ENCODE measurements at regions of chr2 and their contacts with region 1.

Region 1: DNA sequence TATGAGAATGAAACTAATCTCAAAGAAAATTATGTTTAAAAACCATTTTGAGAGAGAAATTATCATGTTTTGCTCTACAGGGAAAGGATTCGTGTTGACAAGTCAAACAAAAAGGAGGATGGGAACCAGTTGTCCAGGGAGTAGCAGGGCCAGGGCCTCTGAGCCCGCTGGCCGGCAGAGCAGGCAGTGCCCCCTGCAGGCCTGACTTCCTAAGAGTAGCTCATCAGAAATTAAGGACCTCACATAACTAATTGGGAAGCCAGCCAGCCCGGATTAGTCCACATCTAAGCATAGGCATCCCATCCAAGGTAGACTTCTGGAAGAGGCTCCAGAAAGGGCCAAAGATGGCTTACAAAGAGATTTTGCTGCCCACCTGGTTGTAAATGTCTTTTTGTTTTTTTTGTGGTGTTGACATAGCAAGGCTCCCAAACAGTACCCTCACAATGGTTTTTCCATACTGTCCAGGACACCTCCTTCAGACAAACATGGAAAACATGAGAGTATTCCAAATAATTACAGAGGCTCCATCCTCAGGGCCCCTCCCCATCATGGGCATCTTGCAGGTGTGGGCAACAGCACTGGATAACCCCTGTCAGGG is 241.2 kb upstream of the TANK start:
- DNase-seq: peak; percentile 21
- ATAC-seq: peak; percentile 87
- H3K4me3 ChIP-seq: no peak overlapping the region
- H3K27ac ChIP-seq: no peak overlapping the region
- H3K4me1 ChIP-seq: no peaks in the 10 kb centered on the region
- H3K27me3 ChIP-seq: no peaks in the 10 kb centered on the region
- CTCF ChIP-seq: peak; percentile 60 to 68 (median 65)
- POLR2A ChIP-seq: no peak
- RAD21 ChIP-seq: peak; percentile 81

Region 2: DNA sequence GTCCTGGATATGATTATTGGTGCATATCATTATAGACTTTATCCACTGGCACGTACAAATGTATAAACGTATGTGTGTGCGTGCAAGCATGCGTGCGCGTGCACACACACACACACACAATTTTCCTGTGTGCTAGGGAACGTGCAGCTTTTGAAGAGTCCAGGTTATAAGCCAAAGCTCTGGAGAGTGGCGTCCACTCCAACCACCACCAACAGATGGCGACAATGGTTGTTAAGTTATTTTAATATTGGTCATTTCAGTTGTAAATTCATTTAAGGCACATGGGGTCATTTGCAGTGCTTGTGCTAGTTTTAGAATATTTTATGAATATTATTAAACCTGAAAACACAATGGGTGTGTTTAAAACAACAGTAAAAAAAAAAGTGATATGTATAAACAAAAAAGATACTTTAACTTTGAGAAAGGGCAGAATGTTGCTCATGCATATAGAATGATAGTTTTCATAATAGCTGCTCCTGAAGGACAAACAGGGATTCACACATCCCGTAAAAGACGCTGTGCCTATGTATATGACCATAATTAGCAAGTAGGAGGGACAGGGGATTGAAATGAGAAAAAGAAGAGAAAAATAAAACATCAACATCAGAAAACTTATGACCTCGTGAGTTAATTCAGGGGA is 594.7 kb before region 1 on chr2:
- CTCF ChIA-PET with region 1: interaction called, 3 read pairs
- POLR2A ChIA-PET with region 1: no interaction called
- RAD21 ChIA-PET with region 1: no interaction called
- intact Hi-C with region 1: loop called (anchors 1 kb)
- DNase-seq: peak; percentile 26
- ATAC-seq: peak; percentile 87
- H3K4me3 ChIP-seq: no peak overlapping the region
- H3K27ac ChIP-seq: no peak overlapping the region
- H3K4me1 ChIP-seq: no peaks in the 10 kb centered on the region
- H3K27me3 ChIP-seq: no peaks in the 10 kb centered on the region
- CTCF ChIP-seq: peak; percentile 61 to 75 (median 74); a peak in 5 of 6 replicates
- POLR2A ChIP-seq: no peak
- RAD21 ChIP-seq: peak; percentile 76

Region 3: GRCh38 chr2:160353166-160353565 is 565.8 kb before region 1 on chr2:
- CTCF ChIA-PET with region 1: interaction called, 3 read pairs
- POLR2A ChIA-PET with region 1: no interaction called
- RAD21 ChIA-PET with region 1: interaction called in 1 of 2 experiments, 3 read pairs
- intact Hi-C with region 1: loop called (anchors 2 kb)
- DNase-seq: no peak
- ATAC-seq: peak; percentile 82
- H3K4me3 ChIP-seq: no peak overlapping the region
- H3K27ac ChIP-seq: no peak overlapping the region
- H3K4me1 ChIP-seq: no peaks in the 10 kb centered on the region
- H3K27me3 ChIP-seq: no peaks in the 10 kb centered on the region
- CTCF ChIP-seq: peak; percentile 32 to 52 (median 42); a peak in 4 of 6 replicates
- POLR2A ChIP-seq: no peak
- RAD21 ChIP-seq: peak; percentile 69

Region 4: DNA sequence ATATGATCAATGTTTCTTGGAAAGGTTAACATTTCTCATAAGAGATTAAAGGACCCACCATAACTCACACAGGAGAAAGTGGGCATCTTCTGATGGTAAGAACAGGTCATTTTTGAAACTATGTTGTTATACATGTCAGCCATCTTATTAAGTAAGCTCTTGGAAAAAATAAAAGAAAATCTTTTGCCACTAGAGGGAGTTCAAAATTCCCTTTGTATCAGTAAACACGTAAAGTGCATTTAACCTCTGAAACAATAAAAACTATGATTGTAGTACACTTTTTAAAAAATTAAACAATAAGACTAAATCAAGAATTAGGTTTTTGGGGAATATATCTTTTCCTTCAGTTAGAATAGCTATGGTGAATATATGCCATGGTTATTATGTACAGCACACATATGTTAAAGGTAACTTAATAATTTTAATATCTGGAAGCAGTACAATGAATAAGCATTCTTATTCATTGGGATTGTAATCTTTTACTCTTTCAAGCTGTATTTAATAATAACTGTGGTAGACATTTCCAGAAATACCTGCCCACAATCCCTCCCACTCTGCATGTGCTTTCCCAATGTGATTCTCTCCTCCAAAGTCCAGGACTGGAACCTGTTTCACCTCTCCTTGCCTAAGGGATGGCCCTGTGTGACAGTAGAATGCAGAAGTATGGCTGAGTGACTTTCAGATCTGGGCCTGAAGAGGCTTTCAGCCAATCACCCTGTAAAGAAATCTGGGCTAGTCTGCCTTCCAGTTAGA is 489.6 kb before region 1 on chr2:
- CTCF ChIA-PET with region 1: interaction called, 5 read pairs
- POLR2A ChIA-PET with region 1: no interaction called
- RAD21 ChIA-PET with region 1: no interaction called
- intact Hi-C with region 1: loop called (anchors 2 kb)
- DNase-seq: peak; percentile 56
- ATAC-seq: peak; percentile 61
- H3K4me3 ChIP-seq: no peak overlapping the region
- H3K27ac ChIP-seq: no peak overlapping the region
- H3K4me1 ChIP-seq: peaks cover 24 to 25% of the 10 kb centered on the region in 2 experiments
- H3K27me3 ChIP-seq: no peaks in the 10 kb centered on the region
- CTCF ChIP-seq: peak; percentile 37 to 70 (median 49); a peak in 5 of 6 replicates
- POLR2A ChIP-seq: no peak
- RAD21 ChIP-seq: peak; percentile 56

Measured in HCT116 (cell line).